HEK293 (cell line): ENCODE measurements at regions of chr22 and their contacts with region 1.

Region 1: GRCh38 chr22:22959147-22959827 is 71.7 kb downstream of the IGLL5 start:
- H3K4me3 ChIP-seq: no peak overlapping the region
- H3K27ac ChIP-seq: no peak overlapping the region
- H3K4me1 ChIP-seq: no peaks in the 10 kb centered on the region
- CTCF ChIP-seq: peak; percentile 98

Region 2: DNA sequence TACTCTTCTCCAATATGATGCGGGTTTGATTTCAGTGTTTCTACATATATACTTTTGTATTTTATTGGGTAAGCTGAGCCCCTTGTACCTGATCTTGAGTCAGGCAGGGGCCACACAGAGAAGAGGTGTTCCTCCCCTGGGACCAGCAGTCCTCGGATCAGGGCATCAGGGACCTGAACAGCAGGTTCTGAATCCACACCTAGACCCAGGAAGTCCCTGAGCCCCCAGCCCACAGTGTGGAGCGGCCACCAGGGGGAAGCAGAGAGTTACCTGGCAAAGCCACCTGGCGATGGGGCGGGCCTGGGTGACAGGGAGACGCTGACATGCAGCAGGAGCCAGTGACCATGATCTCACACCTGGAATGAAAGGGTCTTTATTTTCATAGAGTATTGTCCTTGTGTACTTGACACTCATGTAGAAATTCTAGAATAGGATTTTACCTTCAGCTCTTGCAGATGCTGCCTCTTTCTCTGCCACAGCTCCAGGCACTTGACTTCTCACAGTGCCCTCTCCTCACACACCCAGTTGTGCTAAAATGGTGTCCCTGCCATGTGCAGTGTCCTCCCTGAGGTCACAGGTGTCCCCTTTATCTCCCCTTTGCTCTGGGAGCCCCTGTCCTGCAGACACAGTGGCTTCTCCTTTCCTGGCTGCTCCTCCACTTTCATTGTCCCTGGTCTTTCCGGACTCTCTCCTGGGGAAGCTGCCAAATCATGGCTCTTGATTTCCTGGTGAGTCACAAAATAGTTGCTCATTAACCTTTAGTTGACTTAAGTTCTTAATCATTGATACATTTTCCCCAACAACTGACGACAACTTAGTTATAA is 266.4 kb before region 1 on chr22:
- CTCF ChIA-PET with region 1: interaction called, 11 read pairs
- POLR2A ChIA-PET with region 1: no interaction called
- H3K4me3 ChIP-seq: no peak overlapping the region
- H3K27ac ChIP-seq: no peak overlapping the region
- H3K4me1 ChIP-seq: no peaks in the 10 kb centered on the region
- CTCF ChIP-seq: no peak

Region 3: GRCh38 chr22:22787786-22788459 is 171.4 kb before region 1 on chr22:
- CTCF ChIA-PET with region 1: interaction called, 36 read pairs
- POLR2A ChIA-PET with region 1: no interaction called
- H3K4me3 ChIP-seq: no peak overlapping the region
- H3K27ac ChIP-seq: no peak overlapping the region
- H3K4me1 ChIP-seq: no peaks in the 10 kb centered on the region
- CTCF ChIP-seq: 0 out of 2 replicates have a peak, but pooled peaks have one; percentile 38

Region 4: DNA sequence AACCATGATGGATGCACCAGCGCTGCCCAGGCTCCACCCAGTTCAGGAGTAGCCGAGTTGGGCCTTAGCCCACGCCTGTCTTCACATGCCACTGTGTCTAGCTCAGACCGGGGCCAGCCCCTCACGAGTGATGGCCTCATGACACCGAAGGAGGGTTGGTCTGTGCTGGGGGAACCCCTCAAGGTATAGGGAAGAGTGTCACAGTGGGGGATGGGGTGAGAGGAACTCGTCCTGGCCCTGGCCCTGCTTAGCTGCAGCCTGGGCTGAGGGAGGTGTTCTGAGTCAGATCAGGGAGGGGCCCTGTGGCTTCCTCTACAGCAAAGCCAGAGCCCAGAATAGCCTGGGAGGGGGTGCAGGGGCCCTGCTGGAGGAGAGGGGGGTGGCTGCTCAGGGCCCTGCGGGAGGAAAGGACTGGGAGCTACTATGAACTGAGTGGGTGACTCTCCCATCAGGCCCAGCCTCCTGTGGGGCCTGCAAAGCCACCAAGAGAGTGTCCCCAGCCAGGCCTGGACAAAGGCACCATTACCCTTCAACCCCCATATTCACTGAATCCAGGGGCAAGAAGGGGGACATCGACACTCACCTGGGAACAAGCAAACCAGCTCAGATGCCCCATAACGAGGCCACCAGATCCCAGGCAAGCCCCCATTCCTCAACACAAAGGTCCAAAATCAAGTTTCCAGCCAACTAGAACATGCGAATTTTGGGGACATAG is 30.5 kb before region 1 on chr22:
- CTCF ChIA-PET with region 1: interaction called, 10 read pairs
- POLR2A ChIA-PET with region 1: no interaction called
- H3K4me3 ChIP-seq: no peak overlapping the region
- H3K27ac ChIP-seq: no peak overlapping the region
- H3K4me1 ChIP-seq: no peaks in the 10 kb centered on the region
- CTCF ChIP-seq: no peak

Region 5: GRCh38 chr22:23069502-23070357 is 110.4 kb after region 1 on chr22:
- CTCF ChIA-PET with region 1: interaction called, 13 read pairs
- POLR2A ChIA-PET with region 1: no interaction called
- H3K4me3 ChIP-seq: peak overlapping the region; percentile 55
- H3K27ac ChIP-seq: peak overlapping the region; percentile 27; the same call in 1 of the 2 replicates
- H3K4me1 ChIP-seq: peaks cover 3% of the 10 kb centered on the region; the same call in 1 of the 2 replicates
- CTCF ChIP-seq: peak; percentile 55; the same call in 1 of the 2 replicates

Region 6: GRCh38 chr22:23137905-23138561 is 178.7 kb after region 1 on chr22:
- CTCF ChIA-PET with region 1: interaction called, 161 read pairs
- POLR2A ChIA-PET with region 1: interaction called, 3 read pairs
- H3K4me3 ChIP-seq: no peak overlapping the region
- H3K27ac ChIP-seq: no peak overlapping the region
- H3K4me1 ChIP-seq: no peaks in the 10 kb centered on the region
- CTCF ChIP-seq: no peak

Region 7: DNA sequence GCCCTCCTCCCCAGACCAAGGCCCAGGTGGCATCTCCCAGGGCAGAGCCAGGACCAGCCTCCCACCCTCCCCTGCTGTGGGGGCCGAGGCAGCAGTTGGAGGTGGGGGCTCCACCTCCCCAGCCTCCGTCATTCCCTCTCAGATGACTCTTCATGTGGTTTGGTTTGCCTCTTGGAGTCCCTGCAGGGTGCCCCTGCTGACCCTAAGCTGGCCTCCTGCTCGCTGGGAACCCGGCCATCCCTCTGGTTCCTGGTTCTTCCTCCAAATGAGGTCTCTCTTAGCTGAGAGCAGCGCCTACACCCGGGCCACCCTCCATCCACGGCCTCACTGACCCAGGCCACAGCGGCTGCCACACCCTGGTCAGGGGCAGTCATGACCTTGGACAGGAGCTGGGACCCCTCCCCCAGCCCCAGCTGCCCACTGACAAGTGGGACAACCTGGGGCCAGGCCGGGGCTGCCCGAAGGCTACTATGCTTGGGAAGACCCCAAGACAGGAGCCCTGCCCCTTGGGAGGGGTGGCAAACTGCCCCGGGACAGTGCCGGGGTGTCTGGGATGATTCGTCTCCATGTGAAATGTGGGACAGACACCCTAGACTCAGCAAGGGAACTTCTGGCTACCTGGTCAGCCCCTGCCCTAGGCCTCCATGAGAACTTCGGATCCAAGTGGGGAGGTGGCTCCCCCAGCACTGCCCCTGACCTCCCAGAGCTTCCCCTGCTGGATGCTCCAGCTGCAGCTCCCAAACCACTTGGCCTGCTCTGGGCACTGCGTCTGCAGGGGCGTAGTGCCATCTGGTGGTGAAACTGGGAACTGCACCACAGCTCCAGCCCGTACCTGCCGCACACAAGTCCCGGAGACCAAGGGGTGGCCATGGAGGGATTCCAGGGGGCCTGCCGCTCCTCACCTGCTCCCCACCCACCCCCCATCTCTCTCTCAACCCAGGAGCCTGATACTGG is 426.3 kb after region 1 on chr22:
- CTCF ChIA-PET with region 1: interaction called, 17 read pairs
- POLR2A ChIA-PET with region 1: no interaction called
- H3K4me3 ChIP-seq: no peak overlapping the region
- H3K27ac ChIP-seq: no peak overlapping the region
- H3K4me1 ChIP-seq: no peaks in the 10 kb centered on the region
- CTCF ChIP-seq: peak; percentile 98